Spleen (tissue), 13 donors: ENCODE measurements at regions of chr12 and their contacts with region 1.

Region 1: GRCh38 chr12:40312982-40313576 is 88.3 kb downstream of the LRRK2 start:
- DNase-seq: no peak
- H3K4me3 ChIP-seq: no peak overlapping the region
- H3K27ac ChIP-seq: no peak overlapping the region
- H3K4me1 ChIP-seq: peaks cover 0 to 25% (median 9%) of the 10 kb centered on the region in 6 donors
- H3K27me3 ChIP-seq: no peaks in the 10 kb centered on the region
- CTCF ChIP-seq: peak in 7 of 11 experiments; percentile 21 to 52 (median 39)
- POLR2A ChIP-seq: no peak

Region 2: GRCh38 chr12:40152783-40153383 is 160.2 kb before region 1 on chr12:
- intact Hi-C with region 1: loop called (anchors 10 kb)
- DNase-seq: peak; percentile 70
- H3K4me3 ChIP-seq: no peak overlapping the region
- H3K27ac ChIP-seq: peak overlapping the region in 1 of 8 donors; percentile 57
- H3K4me1 ChIP-seq: peaks cover under 1 to 47% (median 10%) of the 10 kb centered on the region in 6 donors
- H3K27me3 ChIP-seq: no peaks in the 10 kb centered on the region
- CTCF ChIP-seq: peak; percentile 60 to 89 (median 80)
- POLR2A ChIP-seq: no peak